Activated naive CD4-positive, alpha-beta T cell treated with anti-CD3 and anti-CD28 coated beads for 36 hours (primary cell): ENCODE measurements at regions of chr17 and their contacts with region 1.

Region 1: GRCh38 chr17:77471984-77472461 is 331.3 kb downstream of the SEC14L1 start:
- DNase-seq: no peak
- H3K4me3 Mint-ChIP-seq: peak overlapping the region; percentile 67
- H3K27ac Mint-ChIP-seq: peak overlapping the region; percentile 98
- H3K4me1 Mint-ChIP-seq: peaks cover 97% of the 10 kb centered on the region
- H3K27me3 Mint-ChIP-seq: no peaks in the 10 kb centered on the region

Region 2: DNA sequence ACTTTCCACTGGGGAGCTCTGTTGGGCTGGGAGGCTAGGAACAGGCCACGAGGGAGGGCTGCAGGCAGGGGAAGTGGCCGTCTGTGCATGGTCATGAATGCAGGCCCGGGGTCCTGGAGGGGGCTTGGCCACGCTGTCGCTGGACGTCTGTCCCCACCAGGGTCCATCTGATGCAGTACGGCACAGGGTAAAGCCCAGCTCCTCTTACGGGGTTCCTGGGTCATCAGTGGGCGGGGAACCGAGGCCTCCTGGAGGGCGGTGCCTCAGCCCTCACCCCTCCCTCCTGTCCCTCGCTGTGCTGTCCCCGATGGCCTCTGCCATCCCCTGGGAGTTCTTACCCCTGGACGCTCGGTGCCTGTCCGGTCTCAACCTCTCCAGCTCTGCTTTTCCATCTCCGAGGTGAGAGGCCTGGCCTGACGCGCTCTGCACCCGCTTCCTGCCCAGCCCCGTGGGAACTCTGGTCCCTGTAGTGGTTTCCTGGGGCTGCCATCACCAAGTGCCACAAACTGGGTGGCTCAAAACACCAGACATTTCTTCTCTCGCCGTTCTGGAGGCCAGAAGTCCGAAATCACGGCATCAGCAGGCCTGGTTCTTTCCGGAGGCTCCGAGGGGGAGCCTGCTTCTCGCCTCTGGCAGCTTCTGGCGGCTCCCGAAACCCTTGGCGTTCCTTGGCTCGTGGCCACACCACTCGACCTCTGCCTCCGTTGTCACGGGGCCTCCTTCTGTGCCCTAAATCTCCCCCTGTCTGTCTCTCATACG is 148.4 kb before region 1 on chr17:
- CTCF ChIA-PET with region 1: interaction called, 3 read pairs
- intact Hi-C with region 1: loop called (anchors 1 kb)
- DNase-seq: peak; percentile 50
- H3K4me3 Mint-ChIP-seq: no peak overlapping the region
- H3K27ac Mint-ChIP-seq: no peak overlapping the region
- H3K4me1 Mint-ChIP-seq: peaks cover 63% of the 10 kb centered on the region
- H3K27me3 Mint-ChIP-seq: no peaks in the 10 kb centered on the region

Region 3: GRCh38 chr17:77444984-77445759 is 26.9 kb before region 1 on chr17:
- CTCF ChIA-PET with region 1: interaction called, 5 read pairs
- intact Hi-C with region 1: loop called (anchors 1 kb)
- DNase-seq: peak; percentile 87
- H3K4me3 Mint-ChIP-seq: peak overlapping the region; percentile 58
- H3K27ac Mint-ChIP-seq: peak overlapping the region; percentile 94
- H3K4me1 Mint-ChIP-seq: peaks cover 89% of the 10 kb centered on the region
- H3K27me3 Mint-ChIP-seq: no peaks in the 10 kb centered on the region

Region 4: GRCh38 chr17:77456951-77457548 is 15.0 kb before region 1 on chr17:
- CTCF ChIA-PET with region 1: interaction called, 10 read pairs
- intact Hi-C with region 1: loop called (anchors 1 kb)
- DNase-seq: peak; percentile 71
- H3K4me3 Mint-ChIP-seq: peak overlapping the region; percentile 86
- H3K27ac Mint-ChIP-seq: peak overlapping the region; percentile 100
- H3K4me1 Mint-ChIP-seq: peaks cover 42% of the 10 kb centered on the region
- H3K27me3 Mint-ChIP-seq: no peaks in the 10 kb centered on the region